ENCODE measurements at regions of chr9 and their contacts with region 1.

Region 1: GRCh38 chr9:116860509-116861120 is 173.5 kb downstream of the TRIM32 start:
- DNase-seq: peak; percentile 36 to 68 (median 47)
- ATAC-seq: peak in 3 of 4 donors; percentile 65 to 74 (median 73)
- H3K4me3 ChIP-seq: no peak overlapping the region
- H3K27ac ChIP-seq: no peak overlapping the region
- H3K4me1 ChIP-seq: no peaks in the 10 kb centered on the region
- H3K27me3 ChIP-seq: peaks cover 0 to 16% (median 2%) of the 10 kb centered on the region in 9 donors
- CTCF ChIP-seq: peak; percentile 48 to 74 (median 64)
- POLR2A ChIP-seq: no peak

Region 2: GRCh38 chr9:115591584-115591984 is 1269.0 kb before region 1 on chr9:
- intact Hi-C with region 1: loop called in 6 of 10 experiments (anchors 2 to 10 kb)
- DNase-seq: peak in 4 of 5 donors; percentile 33 to 64 (median 52)
- ATAC-seq: peak; percentile 53 to 92 (median 86)
- H3K4me3 ChIP-seq: no peak overlapping the region
- H3K27ac ChIP-seq: peak overlapping the region in 1 of 12 donors; percentile 38
- H3K4me1 ChIP-seq: peaks cover 0 to 6% (median 0%) of the 10 kb centered on the region in 12 donors
- H3K27me3 ChIP-seq: peaks cover 0 to 25% (median 3%) of the 10 kb centered on the region in 9 donors
- CTCF ChIP-seq: peak; percentile 43 to 81 (median 65)
- POLR2A ChIP-seq: no peak

Region 3: DNA sequence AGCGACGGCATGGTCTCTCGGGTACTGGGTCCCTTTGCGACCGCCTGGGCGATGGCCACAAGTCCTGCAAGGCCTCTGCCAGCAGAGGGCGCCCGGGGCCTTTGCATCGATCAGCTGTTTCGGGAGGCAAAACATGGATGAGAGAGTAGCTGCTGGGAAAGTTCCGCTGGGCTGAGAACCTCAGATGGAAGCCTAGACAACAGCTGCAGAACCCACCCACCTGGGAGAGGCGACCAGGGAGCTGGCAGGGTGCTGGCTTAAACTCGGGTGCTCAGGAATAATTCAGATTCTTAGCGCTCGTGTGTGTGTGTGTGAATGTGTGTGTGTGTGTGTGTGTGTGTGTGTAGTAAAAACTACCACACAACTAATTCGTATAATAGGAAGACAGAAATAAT is 123.5 kb before region 1 on chr9:
- intact Hi-C with region 1: loop called (anchors 1 to 5 kb)
- DNase-seq: peak; percentile 52 to 88 (median 68)
- ATAC-seq: peak; percentile 32 to 78 (median 73)
- H3K4me3 ChIP-seq: no peak overlapping the region
- H3K27ac ChIP-seq: no peak overlapping the region
- H3K4me1 ChIP-seq: no peaks in the 10 kb centered on the region
- H3K27me3 ChIP-seq: no peaks in the 10 kb centered on the region
- CTCF ChIP-seq: peak; percentile 64 to 87 (median 79)
- POLR2A ChIP-seq: no peak

Region 4: GRCh38 chr9:117494401-117495090 is 633.9 kb after region 1 on chr9:
- intact Hi-C with region 1: no loop called
- DNase-seq: no peak
- ATAC-seq: no peak
- H3K4me3 ChIP-seq: peak overlapping the region in 2 of 12 donors; percentile 2 to 19
- H3K27ac ChIP-seq: no peak overlapping the region
- H3K4me1 ChIP-seq: no peaks in the 10 kb centered on the region
- H3K27me3 ChIP-seq: peaks cover 0 to under 1% (median 0%) of the 10 kb centered on the region in 9 donors
- CTCF ChIP-seq: no peak
- POLR2A ChIP-seq: no peak

Measured in heart left ventricle (tissue), 16 donors.